Left ventricle myocardium superior (tissue), 1 donor: ENCODE measurements at regions of chr14 and their contacts with region 1.

Region 1: DNA sequence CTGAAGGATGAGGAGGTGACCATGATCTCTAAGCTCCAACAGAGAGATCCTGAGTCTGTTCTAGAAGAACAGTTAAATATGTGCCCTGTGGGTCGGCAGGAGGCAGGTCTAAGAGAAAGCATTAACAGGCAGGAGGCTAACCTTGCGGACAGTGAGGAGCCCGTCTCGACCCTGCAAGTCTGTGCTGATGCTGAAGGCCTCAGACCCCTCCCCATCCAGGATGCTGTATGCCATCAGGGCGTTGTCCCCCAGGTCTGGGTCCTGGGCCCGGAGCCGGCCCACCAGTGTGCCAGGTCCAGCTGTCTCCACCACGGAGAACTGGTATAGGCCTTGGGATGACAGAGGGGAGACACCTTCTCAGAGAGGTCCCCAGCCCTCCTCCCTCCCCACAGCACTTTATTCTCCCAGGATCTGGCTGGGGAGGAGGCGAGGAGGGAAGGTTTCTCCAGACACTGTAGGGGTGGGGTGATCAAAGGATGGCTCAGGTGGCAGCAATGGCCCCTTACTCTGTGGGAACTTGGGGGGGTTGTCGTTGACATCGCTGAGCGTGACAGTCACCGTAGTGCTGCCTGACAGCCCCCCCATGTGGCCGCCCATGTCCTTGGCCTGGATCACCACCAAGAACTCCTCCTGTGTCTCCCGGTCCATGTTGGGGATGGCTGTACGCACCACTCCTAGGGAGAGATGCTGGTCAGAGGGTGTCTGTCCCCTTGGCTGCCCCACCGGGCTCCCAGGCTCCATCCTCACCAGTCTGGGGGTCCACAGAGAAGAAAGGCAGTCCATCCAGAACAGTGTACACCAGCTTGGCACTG is 3.1 kb downstream of the CDH24 start:
- DNase-seq: no peak
- ATAC-seq: no peak

Region 2: DNA sequence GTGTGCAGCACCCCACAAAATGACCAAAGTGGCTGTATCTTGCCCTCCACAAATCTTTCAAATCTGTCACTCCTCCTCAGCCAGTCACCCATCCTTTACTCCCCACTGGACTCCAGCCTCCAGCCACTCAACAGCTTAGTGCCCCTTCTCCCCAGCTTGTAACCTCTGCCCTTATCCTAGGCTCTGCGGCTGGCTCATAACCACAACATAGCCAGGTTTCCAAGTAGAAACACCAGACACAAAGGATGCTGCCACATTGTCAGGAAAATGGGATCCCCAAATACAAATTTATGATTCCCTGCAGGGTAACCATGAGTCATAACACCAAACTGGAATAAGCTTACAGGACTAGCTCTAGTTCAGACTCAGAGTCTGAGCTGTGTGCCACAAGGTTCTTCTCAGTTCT is 272.6 kb before region 1 on chr14:
- intact Hi-C with region 1: no loop called
- DNase-seq: no peak
- ATAC-seq: no peak

Region 3: GRCh38 chr14:22986508-22987054 is 67.6 kb before region 1 on chr14:
- intact Hi-C with region 1: loop called (anchors 5 kb)
- DNase-seq: peak; percentile 88
- ATAC-seq: peak; percentile 34